CD4-positive, alpha-beta memory T cell (primary cell): ENCODE measurements at regions of chr5 and their contacts with region 1.

Region 1: DNA sequence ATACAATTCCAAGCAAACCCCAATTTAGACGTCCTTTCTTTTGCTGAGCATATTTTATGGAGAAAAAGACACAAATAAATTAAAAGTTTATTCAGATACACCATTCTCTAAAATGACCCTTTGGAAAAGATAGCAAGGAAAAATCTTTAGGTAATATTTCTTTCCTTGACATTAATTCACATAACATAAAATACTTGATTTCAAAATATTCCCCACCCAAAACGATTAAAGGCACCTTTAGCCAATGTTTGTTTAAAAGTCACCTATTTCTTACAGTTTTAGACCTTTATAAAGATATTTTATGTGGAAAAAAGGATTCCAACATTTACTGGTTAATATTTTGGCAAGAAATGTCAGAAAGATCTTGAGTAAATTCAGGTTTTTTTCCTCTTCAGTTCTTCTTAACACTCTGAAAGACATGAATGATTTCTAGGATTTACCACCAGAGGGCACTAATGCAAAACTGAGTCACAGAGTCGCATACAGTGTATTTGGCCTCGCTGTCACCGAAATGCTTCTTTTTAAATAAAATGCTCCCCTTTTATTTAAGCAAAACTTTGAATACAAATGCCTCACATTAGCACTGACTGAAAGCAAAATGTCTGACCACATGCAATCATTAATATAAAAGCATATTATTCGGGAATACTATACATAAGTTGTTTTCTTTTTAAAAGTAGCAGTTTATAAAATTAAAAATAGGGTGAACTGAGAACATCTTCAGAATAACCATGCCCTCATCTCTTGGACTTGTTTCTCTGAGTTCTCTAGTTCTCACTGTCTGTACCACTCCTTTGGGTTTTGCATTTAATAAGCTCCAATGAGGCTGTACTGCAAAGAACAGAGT is 122.5 kb downstream of the SLC1A3 start:
- DNase-seq: peak in 4 of 5 donors; percentile 47 to 55 (median 50)
- H3K4me3 ChIP-seq: no peak overlapping the region
- H3K4me3 Mint-ChIP-seq: no peak overlapping the region
- H3K27ac ChIP-seq: no peak overlapping the region
- H3K27ac Mint-ChIP-seq: no peak overlapping the region
- H3K4me1 ChIP-seq: peaks cover 3% of the 10 kb centered on the region
- H3K4me1 Mint-ChIP-seq: peaks cover 6 to 20% (median 11%) of the 10 kb centered on the region in 4 donors
- H3K27me3 ChIP-seq: no peaks in the 10 kb centered on the region
- H3K27me3 Mint-ChIP-seq: peaks cover 4% of the 10 kb centered on the region in 2 donors

Region 2: GRCh38 chr5:36739751-36740221 is 10.9 kb after region 1 on chr5:
- CTCF ChIA-PET with region 1: interaction called, 32 read pairs
- POLR2A ChIA-PET with region 1: no interaction called
- intact Hi-C with region 1: no loop called
- DNase-seq: peak; percentile 51 to 62 (median 59)
- H3K4me3 ChIP-seq: no peak overlapping the region
- H3K4me3 Mint-ChIP-seq: no peak overlapping the region
- H3K27ac ChIP-seq: no peak overlapping the region
- H3K27ac Mint-ChIP-seq: no peak overlapping the region
- H3K4me1 ChIP-seq: peaks cover 11% of the 10 kb centered on the region
- H3K4me1 Mint-ChIP-seq: peaks cover 0 to 9% (median 4%) of the 10 kb centered on the region in 4 donors
- H3K27me3 ChIP-seq: peaks cover 9% of the 10 kb centered on the region
- H3K27me3 Mint-ChIP-seq: peaks cover 23 to 40% of the 10 kb centered on the region in 2 donors

Region 3: DNA sequence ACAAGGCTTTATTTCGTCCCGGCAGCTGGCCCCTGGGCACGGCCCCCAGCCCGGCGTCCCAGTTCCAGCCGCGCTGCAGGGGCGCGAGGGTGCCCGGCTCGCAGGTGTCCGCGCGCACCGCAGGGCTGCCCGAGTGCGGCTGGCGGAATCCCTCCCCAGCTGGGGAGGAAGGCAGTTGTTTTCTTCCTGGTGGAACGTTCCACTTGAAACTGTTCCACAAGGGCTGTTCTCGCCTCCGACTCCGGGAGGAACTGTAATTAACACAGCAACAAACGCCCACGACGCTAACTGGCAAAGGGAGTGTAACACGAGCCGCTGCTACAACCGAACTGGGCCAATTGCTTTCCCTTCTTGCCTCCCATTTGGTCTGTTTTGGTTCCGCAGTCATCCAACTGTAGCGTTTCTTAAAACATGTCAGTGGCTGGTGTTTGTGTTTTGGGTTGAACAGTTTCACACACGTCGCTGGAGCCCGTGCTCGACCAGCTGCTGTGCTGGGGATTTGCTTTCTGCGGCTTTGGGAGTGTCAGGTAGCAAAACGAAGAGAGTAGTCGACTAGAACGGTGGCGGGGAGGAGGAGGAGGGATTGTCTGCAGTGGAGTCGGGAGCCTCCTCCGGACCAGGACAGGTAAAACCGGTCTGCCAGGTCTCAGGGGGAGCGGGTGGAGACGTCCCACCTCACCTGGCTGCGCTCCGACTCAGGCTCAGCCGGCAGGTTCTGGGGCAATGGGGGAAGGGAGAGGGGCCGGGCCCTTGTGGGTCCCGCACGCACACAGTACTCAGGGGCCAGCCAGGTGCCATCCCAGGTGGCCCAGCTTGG is 16.1 kb after region 1 on chr5:
- CTCF ChIA-PET with region 1: interaction called, 32 read pairs
- POLR2A ChIA-PET with region 1: no interaction called
- intact Hi-C with region 1: no loop called
- DNase-seq: peak in 4 of 5 donors; percentile 14 to 19 (median 14)
- H3K4me3 ChIP-seq: peak overlapping the region in 1 of 2 donors; percentile 48
- H3K4me3 Mint-ChIP-seq: peak overlapping the region; percentile 81 to 93 (median 86)
- H3K27ac ChIP-seq: no peak overlapping the region
- H3K27ac Mint-ChIP-seq: peak overlapping the region in 2 of 7 donors; percentile 25 to 57
- H3K4me1 ChIP-seq: peaks cover 15% of the 10 kb centered on the region
- H3K4me1 Mint-ChIP-seq: peaks cover 8 to 12% (median 10%) of the 10 kb centered on the region in 4 donors
- H3K27me3 ChIP-seq: peaks cover 9% of the 10 kb centered on the region
- H3K27me3 Mint-ChIP-seq: peaks cover 24 to 50% of the 10 kb centered on the region in 2 donors

Region 4: GRCh38 chr5:36870399-36871040 is 141.6 kb after region 1 on chr5:
- CTCF ChIA-PET with region 1: interaction called, 43 read pairs
- POLR2A ChIA-PET with region 1: interaction called, 9 read pairs
- intact Hi-C with region 1: loop called (anchors 1 kb)
- DNase-seq: peak in 4 of 5 donors; percentile 68 to 73 (median 70)
- H3K4me3 ChIP-seq: no peak overlapping the region
- H3K4me3 Mint-ChIP-seq: peak overlapping the region in 4 of 8 donors; percentile 2 to 59 (median 24)
- H3K27ac ChIP-seq: no peak overlapping the region
- H3K27ac Mint-ChIP-seq: peak overlapping the region in 4 of 7 donors; percentile 36 to 68 (median 55)
- H3K4me1 ChIP-seq: peaks cover 48% of the 10 kb centered on the region
- H3K4me1 Mint-ChIP-seq: peaks cover 22 to 37% (median 28%) of the 10 kb centered on the region in 4 donors
- H3K27me3 ChIP-seq: no peaks in the 10 kb centered on the region
- H3K27me3 Mint-ChIP-seq: no peaks in the 10 kb centered on the region

Region 5: DNA sequence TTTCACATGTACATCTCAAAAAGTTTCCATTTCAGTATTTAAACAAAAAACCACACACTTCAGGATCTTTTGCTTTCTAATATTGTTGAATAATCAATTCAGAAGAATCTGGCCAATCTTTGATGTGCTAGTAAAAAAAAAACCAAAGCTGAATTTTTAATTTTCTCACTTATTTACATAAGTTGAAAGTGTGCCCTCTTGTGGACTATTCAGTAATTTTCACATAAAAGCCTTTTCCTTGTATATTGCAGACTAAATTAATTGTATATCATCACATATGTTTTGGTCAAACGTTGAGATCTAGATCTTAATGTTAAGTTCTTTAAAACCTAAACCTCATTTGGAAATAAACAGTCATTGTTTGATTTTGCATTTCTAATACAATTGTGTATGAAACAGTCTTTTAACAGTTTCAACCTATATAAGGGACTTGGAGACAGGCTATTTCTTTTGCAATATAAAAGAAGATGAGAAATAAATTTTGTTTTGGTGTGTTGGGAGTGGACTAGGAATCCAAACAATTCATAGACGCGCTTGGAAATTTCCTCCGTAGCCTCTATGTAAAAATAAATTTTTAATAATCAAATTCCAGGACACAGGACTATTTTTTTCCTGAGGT is 215.8 kb after region 1 on chr5:
- CTCF ChIA-PET with region 1: interaction called, 4 read pairs
- POLR2A ChIA-PET with region 1: no interaction called
- intact Hi-C with region 1: loop called (anchors 2 kb)
- DNase-seq: peak in 4 of 5 donors; percentile 35 to 57 (median 46)
- H3K4me3 ChIP-seq: no peak overlapping the region
- H3K4me3 Mint-ChIP-seq: peak overlapping the region in 1 of 8 donors; percentile 4
- H3K27ac ChIP-seq: no peak overlapping the region
- H3K27ac Mint-ChIP-seq: peak overlapping the region in 1 of 7 donors; percentile 41
- H3K4me1 ChIP-seq: peaks cover 27% of the 10 kb centered on the region
- H3K4me1 Mint-ChIP-seq: peaks cover 35 to 53% (median 48%) of the 10 kb centered on the region in 4 donors
- H3K27me3 ChIP-seq: no peaks in the 10 kb centered on the region
- H3K27me3 Mint-ChIP-seq: no peaks in the 10 kb centered on the region

Region 6: DNA sequence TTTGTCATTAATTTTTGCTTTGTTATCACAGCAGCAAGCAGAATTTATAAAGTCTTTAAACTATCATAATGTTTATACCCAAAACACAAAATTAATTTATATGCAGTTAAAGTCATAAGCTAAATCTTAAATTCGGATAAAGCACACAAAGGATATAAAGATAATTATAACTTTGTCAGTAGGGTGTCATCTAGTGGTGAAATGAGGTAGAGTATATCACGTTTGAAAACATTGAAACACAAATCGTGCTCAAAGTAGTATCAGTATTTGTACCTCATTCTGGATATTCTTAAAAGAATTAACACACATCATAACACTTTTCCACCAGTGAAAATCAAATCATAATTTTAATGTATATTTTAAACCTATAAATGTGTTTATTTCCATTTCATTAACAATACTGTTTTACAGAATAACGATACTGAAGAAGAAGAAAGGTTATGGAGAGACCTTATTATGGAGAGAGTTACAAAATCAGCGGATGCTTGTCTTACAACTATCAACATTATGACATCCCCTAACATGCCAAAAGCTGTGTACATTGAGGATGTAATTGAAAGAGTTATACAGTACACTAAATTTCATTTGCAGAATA is 277.1 kb after region 1 on chr5:
- CTCF ChIA-PET with region 1: interaction called, 10 read pairs
- POLR2A ChIA-PET with region 1: no interaction called
- intact Hi-C with region 1: no loop called
- DNase-seq: peak in 1 of 5 donors; percentile 6
- H3K4me3 ChIP-seq: no peak overlapping the region
- H3K4me3 Mint-ChIP-seq: no peak overlapping the region
- H3K27ac ChIP-seq: no peak overlapping the region
- H3K27ac Mint-ChIP-seq: no peak overlapping the region
- H3K4me1 ChIP-seq: no peaks in the 10 kb centered on the region
- H3K4me1 Mint-ChIP-seq: no peaks in the 10 kb centered on the region
- H3K27me3 ChIP-seq: no peaks in the 10 kb centered on the region
- H3K27me3 Mint-ChIP-seq: no peaks in the 10 kb centered on the region